CD14-positive monocyte (primary cell): ENCODE measurements at regions of chr17 and their contacts with region 1.

Region 1: DNA sequence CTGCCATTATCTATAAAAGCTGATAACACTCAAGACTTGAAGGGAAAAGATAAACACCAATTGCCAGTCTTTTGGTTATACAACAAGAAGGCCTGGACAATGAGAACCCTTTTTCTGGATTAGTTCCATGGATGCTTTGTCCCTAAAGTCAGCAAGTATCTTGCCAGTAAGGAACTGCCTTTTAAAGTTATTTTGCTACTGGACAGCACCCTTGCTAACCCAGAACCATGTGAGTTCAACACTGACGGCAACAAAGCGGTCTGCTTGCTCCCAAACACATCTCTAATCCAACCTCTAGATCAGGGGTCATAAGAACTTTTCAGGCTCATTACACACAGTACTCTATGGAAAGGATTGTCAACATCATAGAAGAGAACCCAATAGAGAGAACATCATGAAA is 25.3 kb upstream of the ABCA6 start:
- DNase-seq: no peak
- H3K4me3 ChIP-seq: no peak overlapping the region
- H3K4me3 Mint-ChIP-seq: no peak overlapping the region
- H3K27ac ChIP-seq: no peak overlapping the region
- H3K27ac Mint-ChIP-seq: no peak overlapping the region
- H3K4me1 ChIP-seq: peaks cover 14 to 24% of the 10 kb centered on the region in 2 donors
- H3K4me1 Mint-ChIP-seq: peaks cover 16% of the 10 kb centered on the region
- H3K27me3 ChIP-seq: no peaks in the 10 kb centered on the region
- H3K27me3 Mint-ChIP-seq: no peaks in the 10 kb centered on the region
- CTCF ChIP-seq: no peak

Region 2: DNA sequence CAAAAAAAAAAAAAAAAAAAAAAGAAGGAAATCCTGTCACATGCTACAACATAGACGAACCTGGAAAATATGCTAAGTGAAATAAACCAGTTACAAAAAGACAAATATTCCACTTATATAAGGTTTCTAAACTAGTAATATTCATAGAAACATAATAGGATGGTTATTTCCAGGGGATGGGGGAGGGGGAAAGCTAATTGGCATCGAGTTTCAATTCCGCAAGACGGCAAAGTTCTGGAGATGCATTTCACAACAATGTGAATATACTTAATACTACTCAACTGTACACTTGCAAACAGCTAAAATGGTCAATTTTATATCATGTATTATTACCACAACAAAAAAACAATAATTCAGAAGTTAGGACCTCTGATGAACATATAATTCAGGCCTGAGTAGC is 68.3 kb before region 1 on chr17:
- intact Hi-C with region 1: loop called in 1 of 2 experiments (anchors 5 kb)
- DNase-seq: peak; percentile 40 to 67 (median 49)
- H3K4me3 ChIP-seq: peak overlapping the region in 1 of 3 experiments; percentile 13
- H3K4me3 Mint-ChIP-seq: no peak overlapping the region
- H3K27ac ChIP-seq: peak overlapping the region; percentile 49 to 70
- H3K27ac Mint-ChIP-seq: peak overlapping the region; percentile 76 to 93 (median 88)
- H3K4me1 ChIP-seq: peaks cover 47 to 63% of the 10 kb centered on the region in 2 donors
- H3K4me1 Mint-ChIP-seq: peaks cover 45% of the 10 kb centered on the region
- H3K27me3 ChIP-seq: no peaks in the 10 kb centered on the region
- H3K27me3 Mint-ChIP-seq: no peaks in the 10 kb centered on the region
- CTCF ChIP-seq: no peak

Region 3: DNA sequence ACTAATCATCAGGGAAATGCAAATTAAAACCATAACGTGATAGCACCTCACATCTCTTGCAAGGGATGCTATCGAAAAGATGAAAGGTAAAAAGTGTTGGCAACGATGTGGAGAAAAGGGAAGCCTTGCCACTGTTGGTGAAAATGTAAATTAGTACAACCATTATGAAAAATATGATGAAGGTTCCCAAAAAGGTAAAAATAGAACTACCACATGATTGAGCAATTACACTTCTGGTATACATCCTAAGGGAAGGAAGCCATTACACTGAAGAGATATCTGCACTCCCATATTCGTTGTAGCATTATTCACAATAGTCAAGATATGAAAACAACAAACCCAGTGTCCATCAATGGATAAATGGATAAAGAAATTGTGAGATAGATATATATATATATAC is 40.2 kb after region 1 on chr17:
- intact Hi-C with region 1: no loop called
- DNase-seq: peak in 1 of 3 donors; percentile 21
- H3K4me3 ChIP-seq: no peak overlapping the region
- H3K4me3 Mint-ChIP-seq: no peak overlapping the region
- H3K27ac ChIP-seq: no peak overlapping the region
- H3K27ac Mint-ChIP-seq: peak overlapping the region in 1 of 7 donors; percentile 4
- H3K4me1 ChIP-seq: no peaks in the 10 kb centered on the region
- H3K4me1 Mint-ChIP-seq: peaks cover 12% of the 10 kb centered on the region
- H3K27me3 ChIP-seq: no peaks in the 10 kb centered on the region
- H3K27me3 Mint-ChIP-seq: peaks cover 0 to 2% (median 0%) of the 10 kb centered on the region in 3 donors
- CTCF ChIP-seq: no peak